Left ventricle myocardium superior (tissue), 1 donor: ENCODE measurements at regions of chr15 and their contacts with region 1.

Region 1: DNA sequence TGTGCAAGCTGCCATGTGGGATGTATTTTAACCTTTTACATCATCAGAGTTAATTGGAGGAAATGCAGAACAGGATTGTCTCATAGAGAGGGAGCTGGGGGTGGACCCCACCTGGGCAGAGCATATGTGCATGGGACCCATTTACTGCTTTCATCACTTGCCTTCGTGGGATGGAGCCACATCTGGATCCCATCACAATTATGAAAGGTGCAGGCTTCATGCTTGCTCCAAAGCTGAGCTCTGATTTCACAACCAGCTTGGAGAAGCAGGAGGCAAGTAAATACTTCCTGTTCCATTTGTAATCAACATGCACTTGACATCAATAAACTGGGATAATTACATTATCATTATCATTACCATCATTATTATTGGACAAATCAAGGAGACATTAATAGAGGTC is 161.9 kb downstream of the ALDH1A2 start:
- DNase-seq: no peak
- ATAC-seq: no peak

Region 2: DNA sequence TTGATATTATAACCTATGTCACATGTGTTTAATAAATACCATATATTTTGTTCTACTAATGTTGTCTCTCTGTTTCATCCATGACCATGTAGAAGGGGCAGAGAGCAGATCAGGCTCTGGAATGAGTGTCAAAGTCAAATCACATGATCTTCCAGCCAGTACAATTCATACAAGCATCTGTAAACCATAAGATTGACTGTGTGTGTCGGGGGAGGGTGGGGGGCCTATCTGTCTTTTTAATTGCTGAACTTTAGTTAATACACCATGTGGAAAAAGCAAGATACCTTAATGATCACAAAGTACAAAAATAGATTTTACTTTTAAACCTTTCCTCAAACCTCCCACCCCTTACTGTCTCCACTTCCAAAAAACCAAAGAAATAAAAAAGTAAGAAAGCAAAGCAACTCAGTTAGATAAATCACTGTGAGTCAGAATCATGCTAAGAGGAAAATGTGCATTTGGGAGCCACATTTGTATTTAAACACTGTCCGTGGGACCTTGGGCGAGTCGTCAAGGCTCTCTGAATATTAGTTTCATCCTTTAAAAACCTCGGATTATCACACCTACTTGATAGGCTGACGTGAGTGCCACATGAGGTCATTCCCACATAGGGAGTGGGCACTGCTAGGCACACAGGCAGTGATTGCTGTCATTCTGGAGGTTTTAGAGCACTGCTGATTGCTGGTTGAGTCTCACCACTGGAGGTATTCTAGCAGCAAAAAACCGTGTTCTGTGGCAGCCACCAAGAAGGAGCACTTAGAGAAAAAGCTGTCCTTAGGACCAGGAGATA is 218.1 kb before region 1 on chr15:
- intact Hi-C with region 1: no loop called
- DNase-seq: no peak
- ATAC-seq: peak; percentile 40

Region 3: GRCh38 chr15:58043192-58043903 is 139.7 kb after region 1 on chr15:
- intact Hi-C with region 1: loop called (anchors 10 kb)
- DNase-seq: peak; percentile 46
- ATAC-seq: peak; percentile 55